ENCODE measurements at regions of chr2 and their contacts with region 1.

Region 1: DNA sequence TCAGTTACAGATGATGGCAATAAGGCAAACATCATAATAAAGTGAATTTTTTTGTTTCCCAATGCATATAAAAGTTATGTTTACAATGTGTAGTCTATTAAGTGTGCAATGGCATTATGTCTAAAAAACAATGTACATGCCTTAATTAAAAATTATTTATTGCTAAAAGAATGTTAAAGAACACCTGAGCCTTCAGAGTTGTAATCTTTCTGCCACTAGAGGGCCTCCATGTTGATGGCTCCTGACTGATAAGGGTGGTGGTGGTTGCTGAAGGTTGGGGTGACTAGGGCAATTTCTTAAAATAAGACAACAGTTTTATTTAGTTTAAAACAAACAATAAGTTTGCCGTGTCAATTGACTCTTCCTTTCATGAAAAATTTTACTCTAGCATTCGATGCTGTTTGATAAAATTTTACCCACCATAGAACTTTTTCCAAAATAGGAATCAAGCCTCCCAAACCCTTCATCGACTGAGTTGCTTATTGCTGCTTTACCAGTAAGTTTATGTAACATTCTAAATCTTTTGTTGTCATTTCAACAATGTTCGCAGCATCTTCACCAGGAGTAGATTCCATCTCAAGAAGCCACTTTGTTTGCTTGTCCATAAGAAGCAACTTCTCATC is 32.3 kb downstream of the MAP3K2 start:
- DNase-seq: peak; percentile 38
- ATAC-seq: peak; percentile 64; the same call in 2 of the 3 replicates
- H3K4me3 ChIP-seq: no peak overlapping the region
- H3K27ac ChIP-seq: no peak overlapping the region
- H3K4me1 ChIP-seq: peaks cover 60% of the 10 kb centered on the region
- H3K27me3 ChIP-seq: no peaks in the 10 kb centered on the region
- CTCF ChIP-seq: peak; percentile 61
- EP300 ChIP-seq: no peak
- POLR2A ChIP-seq: no peak
- RAD21 ChIP-seq: peak; percentile 23; the same call in 1 of the 2 replicates

Region 2: DNA sequence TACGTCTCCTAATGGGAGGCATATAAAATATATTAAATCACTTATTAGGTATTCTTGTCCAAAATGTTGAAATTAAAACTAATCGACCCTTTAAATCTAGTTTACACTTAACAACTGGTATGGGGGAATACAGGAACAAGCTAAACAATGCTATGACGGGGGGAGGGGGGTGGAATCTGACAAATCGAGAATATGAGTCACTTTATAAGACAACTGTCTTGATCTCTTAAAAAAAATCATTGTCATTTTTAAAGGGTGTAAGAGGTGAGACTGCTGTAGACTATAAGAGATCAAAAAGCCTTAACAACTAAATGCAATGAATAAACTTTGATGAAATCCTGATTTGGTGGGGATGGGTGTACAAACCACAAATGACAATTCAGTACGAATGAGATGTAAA is 26.3 kb after region 1 on chr2:
- CTCF ChIA-PET with region 1: no interaction called
- POLR2A ChIA-PET with region 1: no interaction called
- in situ Hi-C with region 1: no loop called
- intact Hi-C with region 1: loop called (anchors 2 kb)
- DNase-seq: no peak
- ATAC-seq: no peak
- H3K4me3 ChIP-seq: no peak overlapping the region
- H3K27ac ChIP-seq: no peak overlapping the region
- H3K4me1 ChIP-seq: peaks cover 42% of the 10 kb centered on the region
- H3K27me3 ChIP-seq: no peaks in the 10 kb centered on the region; a peak in 1 of 5 replicates
- CTCF ChIP-seq: no peak
- EP300 ChIP-seq: no peak
- POLR2A ChIP-seq: no peak
- RAD21 ChIP-seq: no peak

Region 3: GRCh38 chr2:127398239-127398590 is 42.7 kb after region 1 on chr2:
- CTCF ChIA-PET with region 1: no interaction called
- POLR2A ChIA-PET with region 1: no interaction called
- in situ Hi-C with region 1: no loop called
- intact Hi-C with region 1: no loop called
- DNase-seq: peak; percentile 78
- ATAC-seq: peak; percentile 73
- H3K4me3 ChIP-seq: no peak overlapping the region
- H3K27ac ChIP-seq: no peak overlapping the region
- H3K4me1 ChIP-seq: peaks cover 41% of the 10 kb centered on the region
- H3K27me3 ChIP-seq: no peaks in the 10 kb centered on the region
- CTCF ChIP-seq: no peak
- EP300 ChIP-seq: no peak
- POLR2A ChIP-seq: no peak
- RAD21 ChIP-seq: no peak

Region 4: DNA sequence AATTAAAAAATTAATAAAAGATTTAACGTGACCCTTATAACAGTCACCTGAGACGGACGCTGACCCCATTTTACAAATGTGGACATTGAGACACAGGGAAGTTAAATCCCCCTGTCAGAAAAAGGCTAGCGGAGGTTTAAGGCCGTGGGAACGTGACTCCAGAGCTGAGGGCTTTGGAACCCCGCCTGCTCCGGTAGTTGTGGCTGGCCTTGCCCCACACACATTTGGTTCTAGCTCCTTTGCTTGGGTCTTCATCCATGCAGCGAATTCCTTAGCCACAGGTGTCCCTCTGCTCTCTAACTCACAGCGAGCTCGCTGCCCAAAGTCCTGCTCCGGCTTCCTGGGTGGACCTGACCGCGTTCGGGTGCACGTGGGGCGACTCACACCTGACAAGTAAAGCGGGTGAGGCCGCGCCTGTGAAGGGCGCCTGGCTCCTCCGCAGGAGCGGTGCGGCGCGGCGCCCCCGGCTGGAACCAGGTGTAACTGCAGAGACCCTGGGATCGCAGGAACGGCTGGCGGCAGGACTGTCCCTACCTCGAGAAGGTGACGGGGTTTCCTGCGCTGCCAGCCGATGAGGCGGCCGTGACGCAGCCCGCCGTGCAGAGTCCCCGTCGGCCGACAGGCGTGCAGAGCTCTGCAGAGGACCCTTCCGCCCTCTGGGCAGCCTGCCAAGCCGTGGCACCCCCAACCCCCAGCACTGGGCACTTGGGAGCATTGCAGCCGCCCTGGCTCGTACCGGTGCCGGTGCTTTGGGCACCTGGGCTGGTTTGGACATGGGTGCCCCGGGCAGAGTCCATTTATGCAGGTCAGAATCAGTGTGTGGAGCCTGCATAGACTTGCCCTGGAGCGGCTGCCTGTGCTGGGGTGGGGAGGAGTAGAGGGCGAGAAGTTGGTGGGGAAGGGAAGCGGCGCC is 60.4 kb after region 1 on chr2:
- CTCF ChIA-PET with region 1: no interaction called
- POLR2A ChIA-PET with region 1: no interaction called
- in situ Hi-C with region 1: no loop called
- intact Hi-C with region 1: loop called (anchors 5 kb)
- DNase-seq: no peak
- ATAC-seq: no peak
- H3K4me3 ChIP-seq: no peak overlapping the region
- H3K27ac ChIP-seq: peak overlapping the region; percentile 96
- H3K4me1 ChIP-seq: peaks cover 100% of the 10 kb centered on the region
- H3K27me3 ChIP-seq: no peaks in the 10 kb centered on the region
- CTCF ChIP-seq: peak; percentile 65
- EP300 ChIP-seq: no peak
- POLR2A ChIP-seq: no peak
- RAD21 ChIP-seq: peak; percentile 62; the same call in 1 of the 2 replicates

Region 5: DNA sequence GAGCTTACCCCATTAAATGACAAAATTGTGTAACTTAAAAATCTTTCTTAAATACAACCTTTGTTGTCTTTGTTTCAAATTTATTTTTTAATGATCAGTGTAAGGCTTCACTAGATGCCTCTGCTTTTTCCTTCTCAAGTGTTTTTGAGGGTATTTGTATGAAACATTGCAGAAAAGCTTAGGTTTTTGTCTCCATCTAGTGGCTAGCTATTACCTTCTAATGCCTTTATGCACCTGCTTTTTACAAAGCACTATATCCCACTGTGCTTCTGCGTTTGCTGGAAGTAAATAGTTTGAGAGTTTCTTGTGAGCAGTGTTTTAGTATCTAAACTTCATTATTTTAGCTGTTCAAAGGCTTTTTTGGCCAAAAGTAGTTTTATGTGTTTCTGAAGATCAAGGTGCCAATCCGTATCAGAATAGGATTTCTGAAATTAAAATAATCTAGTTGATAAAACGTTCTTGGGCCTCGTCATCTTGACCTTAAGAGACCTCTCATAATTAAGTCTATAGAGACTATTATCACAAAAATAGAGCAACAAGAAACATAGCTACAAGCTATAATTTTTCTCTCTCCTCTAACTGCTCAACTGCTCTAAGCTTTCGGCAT is 123.8 kb after region 1 on chr2:
- CTCF ChIA-PET with region 1: interaction called, 10 read pairs
- POLR2A ChIA-PET with region 1: no interaction called
- in situ Hi-C with region 1: no loop called
- intact Hi-C with region 1: no loop called
- DNase-seq: peak; percentile 73
- ATAC-seq: peak; percentile 86
- H3K4me3 ChIP-seq: no peak overlapping the region
- H3K27ac ChIP-seq: no peak overlapping the region
- H3K4me1 ChIP-seq: peaks cover 19% of the 10 kb centered on the region; the same call in 1 of the 2 replicates
- H3K27me3 ChIP-seq: no peaks in the 10 kb centered on the region
- CTCF ChIP-seq: peak; percentile 85
- EP300 ChIP-seq: no peak
- POLR2A ChIP-seq: no peak
- RAD21 ChIP-seq: peak; percentile 87